Common myeloid progenitor, CD34-positive (primary cell): ENCODE measurements at regions of chr5 and their contacts with region 1.

Region 1: DNA sequence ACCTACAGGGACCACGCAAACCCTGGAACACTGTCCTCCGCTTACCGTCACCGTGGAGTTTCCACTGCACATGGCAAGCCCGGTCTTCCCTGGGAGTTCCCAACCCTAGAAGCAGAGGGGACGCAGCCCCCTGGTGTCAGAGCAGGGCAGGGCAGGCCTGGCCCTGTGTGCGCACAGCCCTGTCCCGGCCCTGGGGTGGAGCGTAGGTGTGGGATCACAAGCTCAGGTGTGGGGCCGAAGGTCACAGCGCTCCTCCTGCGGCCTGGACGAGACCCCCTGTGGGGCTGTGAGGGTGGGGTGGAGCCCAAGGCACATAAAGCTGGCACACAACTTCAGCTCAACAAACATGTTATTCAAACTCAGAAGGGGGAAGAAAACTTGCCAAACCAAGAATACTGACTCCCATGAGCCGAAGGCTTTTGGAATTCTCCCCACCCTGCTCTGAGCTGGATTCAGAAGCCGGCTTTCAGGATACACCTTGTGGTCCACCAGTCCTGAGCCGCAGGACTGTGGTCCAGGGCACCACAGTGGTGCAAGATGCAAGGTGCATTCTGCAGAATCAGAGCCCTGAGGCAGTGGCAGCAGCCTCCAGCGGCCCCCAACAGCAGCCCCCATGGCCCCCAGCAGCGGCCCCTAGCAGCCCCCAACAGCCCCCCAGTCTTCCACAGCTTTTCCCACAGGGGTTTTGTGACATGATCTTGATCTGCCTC is 11.8 kb upstream of the EXOC3 start:
- DNase-seq: peak; percentile 43 to 57 (median 43)
- H3K4me3 ChIP-seq: no peak overlapping the region
- H3K27ac ChIP-seq: no peak overlapping the region
- H3K4me1 ChIP-seq: peaks cover 0 to 1% (median 0%) of the 10 kb centered on the region in 4 experiments
- H3K27me3 ChIP-seq: no peaks in the 10 kb centered on the region

Region 2: GRCh38 chr5:317086-317811 is 113.9 kb before region 1 on chr5:
- CTCF ChIA-PET with region 1: interaction called, 124 read pairs
- POLR2A ChIA-PET with region 1: interaction called, 5 read pairs
- DNase-seq: peak; percentile 38 to 61 (median 56)
- H3K4me3 ChIP-seq: no peak overlapping the region
- H3K27ac ChIP-seq: no peak overlapping the region
- H3K4me1 ChIP-seq: peaks cover 0 to 38% (median 18%) of the 10 kb centered on the region in 4 experiments
- H3K27me3 ChIP-seq: peaks cover 0 to 41% (median 18%) of the 10 kb centered on the region in 5 experiments

Region 3: GRCh38 chr5:402615-403359 is 28.4 kb before region 1 on chr5:
- CTCF ChIA-PET with region 1: interaction called, 12 read pairs
- POLR2A ChIA-PET with region 1: no interaction called
- DNase-seq: peak; percentile 22 to 71 (median 66)
- H3K4me3 ChIP-seq: no peak overlapping the region
- H3K27ac ChIP-seq: no peak overlapping the region
- H3K4me1 ChIP-seq: peaks cover 0 to 47% (median 23%) of the 10 kb centered on the region in 4 experiments
- H3K27me3 ChIP-seq: peaks cover 0 to 5% (median 0%) of the 10 kb centered on the region in 5 experiments

Region 4: DNA sequence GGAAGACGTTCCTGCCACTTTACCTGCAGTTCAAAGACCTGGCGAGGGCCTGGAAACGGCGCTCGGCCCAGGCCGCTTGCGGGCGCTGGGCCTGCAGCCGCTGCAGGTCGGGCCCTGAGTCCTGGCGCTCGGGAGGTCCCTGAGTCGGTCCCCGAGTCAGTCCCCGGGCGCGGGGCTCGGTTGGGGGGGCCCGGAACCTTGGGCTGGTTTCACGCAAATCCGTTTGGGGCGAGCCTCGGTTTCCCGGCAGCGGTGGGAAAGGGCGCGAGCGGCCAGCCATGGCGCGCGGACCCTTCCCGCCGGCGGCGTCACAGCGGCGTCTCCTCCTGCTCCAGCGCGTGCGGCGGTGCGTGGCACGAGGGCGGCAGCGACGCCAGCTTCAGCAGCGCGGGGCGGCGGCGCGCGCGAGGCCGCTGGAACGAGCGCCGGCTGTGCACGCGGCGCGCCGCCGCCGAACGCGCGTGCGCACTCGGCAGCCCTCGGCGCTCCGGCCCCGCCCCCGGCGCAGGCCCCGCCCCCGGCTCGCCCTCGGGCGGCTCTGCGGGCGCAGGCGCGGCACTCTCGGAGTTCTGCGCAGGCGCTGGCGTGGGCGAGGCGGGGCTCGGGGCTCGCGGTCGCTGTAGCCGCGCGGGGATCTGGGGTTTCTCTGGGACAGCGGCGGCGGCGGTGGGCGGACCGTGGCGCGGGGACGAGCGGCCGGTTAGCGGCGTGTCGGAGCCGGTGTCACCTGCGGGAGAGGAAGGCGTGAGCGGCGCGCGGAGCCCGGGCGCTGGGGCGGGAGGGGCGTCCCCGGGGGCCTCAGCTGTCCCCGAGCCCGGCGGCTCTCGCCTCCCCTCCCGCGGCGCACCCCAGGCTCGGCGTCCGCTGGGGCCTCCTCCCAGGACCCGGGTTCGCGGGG is 41.7 kb after region 1 on chr5:
- CTCF ChIA-PET with region 1: no interaction called
- POLR2A ChIA-PET with region 1: no interaction called
- DNase-seq: peak; percentile 63 to 85 (median 81)
- H3K4me3 ChIP-seq: peak overlapping the region; percentile 65 to 81 (median 71)
- H3K27ac ChIP-seq: peak overlapping the region in 1 of 2 experiments; percentile 61
- H3K4me1 ChIP-seq: peaks cover 2 to 34% (median 30%) of the 10 kb centered on the region in 4 experiments
- H3K27me3 ChIP-seq: peaks cover 0 to 37% (median 5%) of the 10 kb centered on the region in 5 experiments

Region 5: GRCh38 chr5:511476-511875 is 80.3 kb after region 1 on chr5:
- CTCF ChIA-PET with region 1: no interaction called
- POLR2A ChIA-PET with region 1: no interaction called
- DNase-seq: no peak
- H3K4me3 ChIP-seq: no peak overlapping the region
- H3K27ac ChIP-seq: no peak overlapping the region
- H3K4me1 ChIP-seq: peaks cover 0 to 3% (median under 1%) of the 10 kb centered on the region in 4 experiments
- H3K27me3 ChIP-seq: peaks cover 0 to 34% (median 7%) of the 10 kb centered on the region in 5 experiments

Region 6: DNA sequence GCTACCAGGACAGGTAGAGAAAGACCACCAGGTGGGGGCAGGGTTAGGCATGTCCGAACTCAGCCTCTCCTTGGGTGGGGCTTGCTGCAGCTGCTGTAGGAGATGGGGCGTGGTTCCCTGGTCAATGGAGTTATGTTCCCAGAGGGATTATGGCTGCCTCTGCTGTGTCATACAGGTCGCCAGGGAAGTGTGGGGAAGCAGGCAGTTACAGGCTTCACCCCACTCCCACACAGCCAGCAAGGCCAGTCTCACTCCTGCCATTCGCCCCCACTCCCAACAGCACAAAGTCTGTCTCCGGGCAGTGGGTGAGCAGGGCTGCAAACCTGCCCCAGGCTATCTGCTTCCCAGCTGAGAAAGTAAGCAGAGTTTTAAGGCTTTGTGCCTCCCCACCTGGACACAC is 161.0 kb after region 1 on chr5:
- CTCF ChIA-PET with region 1: no interaction called
- POLR2A ChIA-PET with region 1: no interaction called
- DNase-seq: no peak
- H3K4me3 ChIP-seq: no peak overlapping the region
- H3K27ac ChIP-seq: no peak overlapping the region
- H3K4me1 ChIP-seq: no peaks in the 10 kb centered on the region
- H3K27me3 ChIP-seq: peaks cover 0 to 54% (median 12%) of the 10 kb centered on the region in 5 experiments